Cardiac septum (tissue), 1 donor: ENCODE measurements at regions of chr2 and their contacts with region 1.

Region 1: GRCh38 chr2:240259201-240259923 is 118.9 kb upstream of the OTOS start:
- DNase-seq: peak; percentile 91

Region 2: DNA sequence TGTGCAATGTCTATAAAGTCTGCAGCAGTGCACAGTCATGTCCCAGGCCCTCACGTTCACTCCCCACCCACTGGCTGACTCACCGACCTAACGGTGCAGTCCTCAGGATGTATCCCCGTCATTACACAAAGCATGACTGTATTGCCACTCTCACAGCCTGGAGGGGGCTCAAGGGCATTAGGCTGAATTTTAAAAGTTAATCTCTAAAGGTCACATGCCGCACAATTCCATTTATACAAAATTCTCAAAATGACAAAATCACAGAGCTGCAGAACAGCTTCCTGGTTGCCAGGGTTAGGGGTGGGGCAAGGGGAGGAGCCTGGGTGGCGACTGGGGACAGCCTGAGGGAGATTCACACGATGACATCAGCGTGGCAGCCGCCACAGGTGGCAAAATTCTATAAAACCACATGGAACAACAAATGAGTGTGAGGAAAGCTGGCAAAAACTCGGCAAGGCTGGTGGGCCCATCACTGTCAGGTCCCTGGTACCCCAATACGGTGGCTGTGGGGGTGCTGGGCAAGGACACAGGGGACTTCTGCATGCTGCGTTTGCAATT is 331.9 kb before region 1 on chr2:
- intact Hi-C with region 1: no loop called
- DNase-seq: peak; percentile 66

Region 3: GRCh38 chr2:240293557-240294461 is 34.4 kb after region 1 on chr2:
- intact Hi-C with region 1: loop called (anchors 2 kb)
- DNase-seq: peak; percentile 77

Region 4: DNA sequence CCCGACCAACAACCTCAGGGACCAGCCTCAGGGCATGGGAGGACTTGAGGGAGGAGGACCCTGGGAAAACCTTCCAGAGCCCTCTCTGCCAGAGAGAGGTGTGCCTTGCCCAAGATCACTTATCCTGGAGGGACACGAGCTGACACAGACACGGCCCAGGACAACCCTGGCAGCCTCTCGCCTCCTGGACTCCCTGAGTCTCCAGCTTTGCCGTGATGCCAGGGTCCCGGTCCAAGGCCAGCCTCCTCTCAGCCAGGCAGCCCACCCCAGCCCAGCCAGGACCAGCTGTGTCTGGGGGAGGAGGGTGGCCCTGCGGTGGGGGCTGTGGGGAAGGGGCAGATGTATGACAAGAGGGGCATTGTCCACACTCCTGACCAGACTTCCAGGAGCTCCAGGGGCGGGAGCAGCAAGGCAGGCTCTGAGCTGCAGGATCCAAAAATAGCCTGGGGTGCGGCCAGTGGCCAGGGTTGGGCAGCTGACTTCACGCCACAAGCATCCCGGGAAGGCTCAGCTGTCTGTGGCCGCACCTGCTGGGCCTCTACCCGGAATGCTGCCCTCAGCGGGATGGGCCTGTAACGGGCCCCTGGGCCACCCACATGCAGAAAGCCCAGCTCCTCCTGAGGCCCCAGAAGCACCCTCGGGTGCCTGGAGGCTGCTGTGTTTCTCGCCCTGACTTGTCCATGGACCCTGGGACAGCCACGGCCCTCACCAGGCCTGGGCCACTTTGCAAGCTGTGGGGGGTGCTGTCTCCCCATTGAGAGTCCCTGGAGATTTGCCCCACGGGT is 110.6 kb after region 1 on chr2:
- intact Hi-C with region 1: loop called (anchors 2 kb)
- DNase-seq: peak; percentile 91